PC-9 (cell line): ENCODE measurements at regions of chr11 and their contacts with region 1.

Region 1: GRCh38 chr11:83819933-83820549 is 533.9 kb upstream of the CCDC90B start:
- DNase-seq: peak in 1 of 2 experiments; percentile 59
- H3K4me3 ChIP-seq: no peak overlapping the region
- H3K27ac ChIP-seq: no peak overlapping the region
- H3K4me1 ChIP-seq: no peaks in the 10 kb centered on the region
- H3K27me3 ChIP-seq: no peaks in the 10 kb centered on the region
- CTCF ChIP-seq: peak; percentile 86

Region 2: DNA sequence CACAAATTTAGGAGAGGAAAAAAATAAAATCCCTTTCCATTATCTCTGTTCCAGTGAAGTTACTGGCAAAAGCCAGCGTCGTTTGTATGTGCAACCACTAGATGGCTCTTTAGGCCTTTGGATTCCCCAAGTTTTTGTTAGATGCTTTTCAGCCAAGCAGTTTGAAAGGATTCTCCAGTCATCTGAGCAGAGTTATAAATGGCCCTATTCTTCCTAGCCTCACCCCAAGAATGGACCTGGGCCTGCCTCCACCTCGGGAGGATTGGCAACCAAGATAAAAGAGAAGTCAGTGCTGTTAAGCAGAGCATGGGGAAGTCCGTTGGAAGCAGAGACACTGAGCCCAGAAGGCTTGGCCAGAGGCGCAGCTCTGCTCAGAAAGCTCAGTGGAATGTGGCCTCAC is 1101.7 kb before region 1 on chr11:
- CTCF ChIA-PET with region 1: no interaction called
- POLR2A ChIA-PET with region 1: no interaction called
- intact Hi-C with region 1: loop called (anchors 1 kb)
- DNase-seq: peak; percentile 32 to 53
- H3K4me3 ChIP-seq: no peak overlapping the region
- H3K27ac ChIP-seq: no peak overlapping the region
- H3K4me1 ChIP-seq: no peaks in the 10 kb centered on the region
- H3K27me3 ChIP-seq: peaks cover 7% of the 10 kb centered on the region; the same call in 1 of the 2 replicates
- CTCF ChIP-seq: peak; percentile 92

Region 3: GRCh38 chr11:82906244-82906654 is 913.8 kb before region 1 on chr11:
- CTCF ChIA-PET with region 1: no interaction called
- POLR2A ChIA-PET with region 1: no interaction called
- intact Hi-C with region 1: loop called (anchors 1 kb)
- DNase-seq: peak in 1 of 2 experiments; percentile 50
- H3K4me3 ChIP-seq: no peak overlapping the region
- H3K27ac ChIP-seq: no peak overlapping the region
- H3K4me1 ChIP-seq: peaks cover 9% of the 10 kb centered on the region
- H3K27me3 ChIP-seq: no peaks in the 10 kb centered on the region
- CTCF ChIP-seq: peak; percentile 91

Region 4: DNA sequence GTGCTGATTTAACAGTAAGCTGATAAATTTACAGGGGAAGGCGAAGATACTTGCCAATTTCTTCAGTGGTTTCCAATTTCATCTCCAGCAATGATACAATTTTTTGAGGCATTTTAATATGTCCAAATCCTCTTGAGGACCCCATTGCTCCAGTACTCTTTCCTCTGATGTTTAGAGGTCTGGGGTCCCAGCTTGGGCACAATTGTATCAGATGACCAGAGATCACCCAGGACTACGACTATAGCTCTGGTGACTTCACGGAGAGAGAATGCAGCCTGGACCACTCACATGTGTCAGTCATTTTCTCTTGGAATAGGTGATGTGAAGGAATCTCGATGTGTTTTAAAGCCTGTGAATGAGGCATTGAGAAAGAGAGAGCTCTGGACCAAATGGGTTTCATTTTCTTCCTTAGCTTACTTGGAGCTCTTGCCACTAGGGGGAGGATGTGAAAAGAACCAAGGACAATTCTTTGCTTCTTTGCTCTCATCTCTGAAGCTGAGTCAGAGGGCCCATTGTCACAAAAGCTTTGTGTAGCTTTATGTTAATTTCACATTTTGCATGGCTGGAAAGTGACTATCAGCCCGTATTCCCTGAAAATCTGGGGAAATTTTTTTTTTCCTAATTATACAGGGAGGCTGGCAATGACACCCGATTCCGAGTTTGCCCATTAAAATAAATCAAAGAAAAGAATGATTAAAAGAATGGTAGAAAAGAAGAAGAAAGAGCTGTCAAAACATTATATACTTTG is 527.2 kb before region 1 on chr11:
- CTCF ChIA-PET with region 1: interaction called, 10 read pairs
- POLR2A ChIA-PET with region 1: interaction called, 4 read pairs
- intact Hi-C with region 1: loop called (anchors 2 kb)
- DNase-seq: peak in 1 of 2 experiments; percentile 14
- H3K4me3 ChIP-seq: no peak overlapping the region
- H3K27ac ChIP-seq: no peak overlapping the region
- H3K4me1 ChIP-seq: no peaks in the 10 kb centered on the region
- H3K27me3 ChIP-seq: no peaks in the 10 kb centered on the region
- CTCF ChIP-seq: peak; percentile 83

Region 5: DNA sequence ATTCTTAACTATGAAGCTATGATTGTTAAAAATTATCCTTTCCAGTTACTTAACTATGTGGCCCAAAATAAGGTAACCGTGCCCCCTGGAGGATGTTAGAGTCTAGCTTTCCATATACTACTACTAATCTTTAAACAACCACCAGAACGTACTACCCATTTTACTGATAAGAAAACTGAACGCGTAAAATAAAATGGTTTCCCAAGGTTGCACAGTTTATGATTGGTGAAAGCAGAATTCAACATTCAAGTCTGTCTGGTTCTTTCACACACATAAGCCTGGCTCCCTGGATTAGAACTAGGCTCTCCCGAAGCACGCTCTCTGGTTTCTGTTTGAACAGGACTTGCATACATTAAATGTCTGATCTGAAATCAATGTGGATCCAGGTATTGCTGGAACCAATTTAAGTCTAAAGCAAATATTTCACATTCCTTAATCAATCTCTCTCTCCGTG is 96.0 kb before region 1 on chr11:
- CTCF ChIA-PET with region 1: no interaction called
- POLR2A ChIA-PET with region 1: no interaction called
- intact Hi-C with region 1: loop called (anchors 5 kb)
- DNase-seq: peak; percentile 10 to 45
- H3K4me3 ChIP-seq: peak overlapping the region; percentile 29; the same call in 1 of the 2 replicates
- H3K27ac ChIP-seq: no peak overlapping the region
- H3K4me1 ChIP-seq: no peaks in the 10 kb centered on the region
- H3K27me3 ChIP-seq: peaks cover 4% of the 10 kb centered on the region; the same call in 1 of the 2 replicates
- CTCF ChIP-seq: peak; percentile 41; the same call in 1 of the 2 replicates